Astrocyte of the cerebellum (primary cell): ENCODE measurements at regions of chr6 and their contacts with region 1.

Region 1: DNA sequence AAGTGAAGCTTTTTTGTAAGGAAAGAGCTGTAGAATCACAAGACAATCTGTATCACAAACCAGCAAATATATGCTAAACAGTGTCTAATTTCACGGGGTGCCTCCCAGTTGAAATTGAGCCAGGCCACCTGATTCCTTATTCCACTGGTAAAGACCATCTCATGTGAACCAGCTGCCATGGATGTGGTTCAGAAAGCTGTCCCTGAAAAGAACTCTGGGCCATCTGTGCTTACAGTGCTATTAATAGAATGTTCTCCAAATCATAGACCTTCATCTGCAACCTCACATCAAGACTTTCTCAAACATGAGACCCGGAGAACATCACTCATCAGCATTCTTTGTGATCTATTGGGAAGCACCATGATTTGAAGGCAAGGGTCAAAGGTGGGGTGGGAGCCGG is 89.7 kb downstream of the FBXO5 start:
- DNase-seq: no peak
- H3K4me3 ChIP-seq: no peak overlapping the region
- CTCF ChIP-seq: no peak

Region 2: GRCh38 chr6:152932865-152933264 is 39.7 kb after region 1 on chr6:
- in situ Hi-C with region 1: loop called (anchors 5 kb)
- DNase-seq: no peak
- H3K4me3 ChIP-seq: no peak overlapping the region
- CTCF ChIP-seq: no peak